ENCODE measurements at regions of chr11 and their contacts with region 1.

Region 1: DNA sequence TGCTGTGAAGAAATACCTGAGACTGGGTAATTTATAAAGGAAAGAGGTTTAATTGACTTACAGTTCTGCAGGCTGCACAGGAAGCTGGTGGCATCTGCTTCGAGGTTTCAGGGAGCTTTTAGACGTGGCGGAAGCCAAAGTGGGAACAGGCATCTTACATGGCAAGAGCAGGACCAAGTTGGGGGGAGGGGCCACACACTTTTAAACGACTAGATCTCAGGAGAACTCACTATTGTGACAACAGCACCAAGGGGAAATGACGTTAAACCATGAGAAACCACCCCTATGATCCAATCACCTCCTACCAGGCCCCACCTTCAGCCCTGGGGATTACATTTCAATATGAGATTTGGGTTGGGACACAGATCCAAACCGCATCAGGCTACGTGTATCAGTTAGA is 11.1 kb upstream of the SCGB1D4 start:
- DNase-seq: no peak
- H3K4me3 Mint-ChIP-seq: no peak overlapping the region
- H3K27ac Mint-ChIP-seq: no peak overlapping the region
- H3K4me1 Mint-ChIP-seq: peaks cover 5% of the 10 kb centered on the region
- H3K27me3 Mint-ChIP-seq: peaks cover 32% of the 10 kb centered on the region

Region 2: GRCh38 chr11:61332797-61333549 is 977.0 kb before region 1 on chr11 and contains the starts of genes DDB1 and TKFC:
- intact Hi-C with region 1: no loop called
- DNase-seq: peak; percentile 98
- H3K4me3 Mint-ChIP-seq: peak within 1 kb of the TSS; percentile 93
- H3K27ac Mint-ChIP-seq: peak within 1 kb of the TSS; percentile 97
- H3K4me1 Mint-ChIP-seq: peaks cover 58% of the 10 kb centered on the region
- H3K27me3 Mint-ChIP-seq: no peaks in the 10 kb centered on the region
- total RNA-seq, gene DDB1: 259 and 270 TPM in 2 replicates
- total RNA-seq, gene TKFC: 71.2 and 78.2 TPM in 2 replicates

Region 3: GRCh38 chr11:61923166-61924063 is 386.6 kb before region 1 on chr11:
- intact Hi-C with region 1: no loop called
- DNase-seq: no peak
- H3K4me3 Mint-ChIP-seq: no peak overlapping the region
- H3K27ac Mint-ChIP-seq: no peak overlapping the region
- H3K4me1 Mint-ChIP-seq: peaks cover 2% of the 10 kb centered on the region
- H3K27me3 Mint-ChIP-seq: peaks cover 29% of the 10 kb centered on the region

Region 4: DNA sequence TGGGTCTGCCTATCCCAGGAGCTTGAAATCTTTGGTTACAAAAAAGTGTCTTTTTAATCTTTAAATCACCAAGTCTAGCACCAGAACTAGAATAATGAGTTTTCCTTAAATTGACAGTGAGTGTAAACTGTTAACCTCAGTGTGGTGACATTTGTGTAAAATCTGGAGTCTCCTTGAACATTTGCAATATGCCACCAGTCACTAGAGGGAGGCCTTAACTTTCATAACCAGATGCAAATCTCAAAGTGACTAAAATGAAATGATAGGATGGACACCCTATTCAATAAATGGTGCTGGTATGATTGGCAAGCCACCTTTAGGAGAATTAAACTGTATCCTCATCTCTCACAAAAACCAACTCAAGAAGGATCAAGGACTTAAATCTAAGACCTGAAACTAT is 76.3 kb before region 1 on chr11:
- intact Hi-C with region 1: loop called (anchors 5 kb)
- DNase-seq: no peak
- H3K4me3 Mint-ChIP-seq: no peak overlapping the region
- H3K27ac Mint-ChIP-seq: no peak overlapping the region
- H3K4me1 Mint-ChIP-seq: no peaks in the 10 kb centered on the region
- H3K27me3 Mint-ChIP-seq: peaks cover 20% of the 10 kb centered on the region

Measured in activated T-helper 1 cell treated with anti-CD3 and anti-CD28 coated beads, Interleukin-12 subunit alpha, Interleukin-12 subunit beta, Interleukin-2, Interleukin-4 antibody, amounts not matched to agents 30 ng/mL and 10 ng/mL and 1 ng/mL, durations not matched to agents 14 hours and 24 hours and 36 hours (primary cell).